ENCODE measurements at regions of chr3 and their contacts with region 1.

Region 1: GRCh38 chr3:70550723-70551319 is 238.4 kb upstream of the MDFIC2 start:
- DNase-seq: peak; percentile 55 to 79 (median 66)
- ATAC-seq: peak in 3 of 4 donors; percentile 85 to 87 (median 85)
- H3K4me3 ChIP-seq: no peak overlapping the region
- H3K27ac ChIP-seq: no peak overlapping the region
- H3K4me1 ChIP-seq: no peaks in the 10 kb centered on the region
- H3K27me3 ChIP-seq: no peaks in the 10 kb centered on the region
- CTCF ChIP-seq: peak; percentile 67 to 88 (median 78)
- POLR2A ChIP-seq: no peak

Region 2: GRCh38 chr3:70702132-70702531 is 151.3 kb after region 1 on chr3:
- intact Hi-C with region 1: no loop called
- DNase-seq: no peak
- ATAC-seq: no peak
- H3K4me3 ChIP-seq: no peak overlapping the region
- H3K27ac ChIP-seq: no peak overlapping the region
- H3K4me1 ChIP-seq: peaks cover 0 to 18% (median 0%) of the 10 kb centered on the region in 12 donors
- H3K27me3 ChIP-seq: no peaks in the 10 kb centered on the region
- CTCF ChIP-seq: no peak
- POLR2A ChIP-seq: no peak

Region 3: GRCh38 chr3:71591101-71591500 is 1040.3 kb after region 1 on chr3:
- intact Hi-C with region 1: loop called in 9 of 10 experiments (anchors 2 to 10 kb)
- DNase-seq: no peak
- ATAC-seq: no peak
- H3K4me3 ChIP-seq: no peak overlapping the region
- H3K27ac ChIP-seq: no peak overlapping the region
- H3K4me1 ChIP-seq: peaks cover 0 to 7% (median 4%) of the 10 kb centered on the region in 12 donors
- H3K27me3 ChIP-seq: no peaks in the 10 kb centered on the region
- CTCF ChIP-seq: no peak
- POLR2A ChIP-seq: no peak

Region 4: GRCh38 chr3:71599416-71599815 is 1048.6 kb after region 1 on chr3:
- intact Hi-C with region 1: loop called in 2 of 10 experiments (anchors 5 to 10 kb)
- DNase-seq: no peak
- ATAC-seq: peak in 1 of 4 donors; percentile 39
- H3K4me3 ChIP-seq: no peak overlapping the region
- H3K27ac ChIP-seq: no peak overlapping the region
- H3K4me1 ChIP-seq: peaks cover 0 to 15% (median 0%) of the 10 kb centered on the region in 12 donors
- H3K27me3 ChIP-seq: no peaks in the 10 kb centered on the region
- CTCF ChIP-seq: no peak
- POLR2A ChIP-seq: no peak

Measured in heart left ventricle (tissue), 16 donors.